Left cardiac atrium (tissue), 4 donors: ENCODE measurements at regions of chr16 and their contacts with region 1.

Region 1: DNA sequence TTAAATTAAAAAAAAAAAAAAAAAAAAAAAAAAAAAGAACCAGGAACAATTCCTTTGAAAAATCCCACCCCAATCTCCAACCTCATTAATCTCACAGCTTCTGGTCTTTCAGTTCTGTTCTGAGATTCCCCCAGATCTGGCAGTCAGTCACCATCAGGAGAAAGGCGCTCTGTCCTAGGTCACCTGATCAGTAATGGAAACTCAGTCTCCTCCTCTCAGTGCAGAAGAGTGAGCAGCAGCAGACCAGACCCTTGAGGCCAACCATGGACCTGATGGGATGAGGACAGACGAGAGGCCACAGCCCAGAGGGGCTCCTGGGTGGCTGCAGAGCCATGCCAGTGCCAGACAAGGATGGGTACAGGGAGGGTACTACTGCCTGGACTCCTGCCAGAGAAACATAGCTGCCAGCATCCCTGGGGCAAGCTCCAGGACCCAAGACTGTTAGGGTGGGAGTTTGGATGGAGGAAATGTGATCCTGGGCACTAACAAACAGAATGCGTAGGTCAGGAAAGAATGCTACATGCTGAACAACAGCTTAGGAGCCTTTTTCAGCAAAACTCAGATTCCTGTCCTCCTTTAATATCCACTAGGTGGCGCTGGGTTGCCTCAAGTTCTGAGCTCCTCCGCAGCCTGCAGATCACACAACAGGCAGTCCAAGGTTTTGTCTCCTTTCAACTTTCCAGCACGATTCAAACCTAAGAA is 28.7 kb downstream of the MPG start:
- DNase-seq: peak; percentile 56
- ATAC-seq: peak in 1 of 2 donors; percentile 38

Region 2: DNA sequence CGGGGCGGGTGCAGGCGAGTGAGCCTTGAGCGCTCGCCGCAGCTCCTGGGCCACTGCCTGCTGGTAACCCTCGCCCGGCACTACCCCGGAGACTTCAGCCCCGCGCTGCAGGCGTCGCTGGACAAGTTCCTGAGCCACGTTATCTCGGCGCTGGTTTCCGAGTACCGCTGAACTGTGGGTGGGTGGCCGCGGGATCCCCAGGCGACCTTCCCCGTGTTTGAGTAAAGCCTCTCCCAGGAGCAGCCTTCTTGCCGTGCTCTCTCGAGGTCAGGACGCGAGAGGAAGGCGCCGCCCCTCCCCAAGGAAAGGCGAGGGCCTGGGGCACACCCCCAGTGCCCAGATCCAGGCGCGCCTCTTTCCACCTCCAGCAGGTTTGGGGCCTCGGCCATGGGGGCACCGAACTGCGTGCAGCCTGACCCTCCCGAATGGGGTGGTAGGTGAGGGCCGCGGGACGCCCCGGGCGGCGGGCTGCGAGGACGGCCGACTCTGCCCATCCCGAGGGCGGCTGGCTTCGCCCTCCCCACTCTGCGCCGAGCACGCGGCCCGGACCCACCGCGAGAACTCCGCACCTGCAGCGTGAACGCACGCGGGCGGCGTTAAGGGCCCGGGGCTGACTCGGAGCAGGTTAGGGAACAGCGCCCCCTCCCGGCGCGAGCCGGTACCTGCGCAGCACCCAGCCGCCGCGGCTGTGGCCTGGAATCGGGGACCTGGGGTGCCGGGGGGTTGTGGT is 74.3 kb after region 1 on chr16:
- intact Hi-C with region 1: loop called (anchors 5 kb)
- DNase-seq: peak; percentile 78
- ATAC-seq: peak; percentile 78 to 83